ENCODE measurements at regions of chr13 and their contacts with region 1.

Region 1: DNA sequence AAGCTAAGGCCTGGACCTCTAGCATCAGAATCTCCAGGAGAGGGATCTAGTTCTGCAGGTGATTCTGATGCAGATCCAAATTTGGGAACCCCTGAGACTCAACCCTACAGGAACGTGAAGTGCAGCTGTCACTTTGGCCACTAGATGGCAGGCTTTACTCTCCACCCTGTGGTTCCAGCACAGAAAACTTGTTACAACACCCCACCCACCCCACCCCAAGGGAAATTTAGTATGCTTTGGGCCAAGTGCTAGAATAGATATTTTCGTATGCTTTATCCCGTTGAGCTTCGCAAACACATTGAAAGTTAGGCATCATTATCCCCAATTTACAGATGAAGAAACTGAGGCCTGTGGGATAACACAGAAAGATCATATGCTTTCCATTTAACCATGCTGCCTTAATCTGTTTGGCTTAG is 232.0 kb downstream of the B3GLCT start:
- DNase-seq: peak; percentile 55
- H3K4me3 Mint-ChIP-seq: no peak overlapping the region
- H3K27ac Mint-ChIP-seq: no peak overlapping the region
- H3K4me1 Mint-ChIP-seq: no peaks in the 10 kb centered on the region
- H3K27me3 Mint-ChIP-seq: peaks cover 38% of the 10 kb centered on the region
- CTCF ChIP-seq: peak; percentile 88

Region 2: GRCh38 chr13:31250435-31250834 is 181.3 kb before region 1 on chr13:
- CTCF ChIA-PET with region 1: interaction called, 378 read pairs
- POLR2A ChIA-PET with region 1: no interaction called
- intact Hi-C with region 1: no loop called
- DNase-seq: no peak
- H3K4me3 Mint-ChIP-seq: no peak overlapping the region
- H3K27ac Mint-ChIP-seq: no peak overlapping the region
- H3K4me1 Mint-ChIP-seq: no peaks in the 10 kb centered on the region
- H3K27me3 Mint-ChIP-seq: no peaks in the 10 kb centered on the region
- CTCF ChIP-seq: no peak

Region 3: DNA sequence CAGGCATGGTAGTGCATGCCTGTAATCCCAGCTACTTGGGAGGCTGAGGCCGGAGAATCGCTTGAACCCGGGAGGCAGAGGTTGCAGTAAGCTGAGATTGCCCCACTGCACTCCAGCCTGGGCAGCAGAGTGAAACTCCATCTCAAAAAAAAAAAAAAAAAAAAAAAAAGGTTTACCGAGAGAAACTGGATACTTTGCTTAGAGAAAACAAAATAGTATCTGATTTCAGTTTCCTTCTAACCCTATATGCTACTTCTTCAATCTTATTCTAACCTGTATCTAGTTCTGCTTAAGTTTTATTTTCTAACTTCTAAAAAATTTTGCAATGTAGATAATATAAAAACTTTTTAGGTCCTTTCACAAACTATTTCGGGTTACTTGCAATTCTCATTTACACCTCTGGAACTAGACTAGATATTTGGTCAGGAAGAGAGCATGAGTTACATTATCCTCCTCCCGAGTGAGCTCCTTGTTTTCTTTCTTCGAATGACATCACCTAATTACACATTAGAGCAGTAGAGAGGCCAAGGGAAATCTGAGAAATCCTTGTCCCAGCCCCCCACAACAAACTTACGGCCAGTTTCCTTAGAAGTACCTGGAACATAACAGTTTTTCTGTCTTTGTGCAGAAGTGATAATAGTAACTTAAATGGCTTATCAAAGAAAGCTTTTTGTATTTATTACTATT is 103.0 kb before region 1 on chr13:
- CTCF ChIA-PET with region 1: no interaction called
- POLR2A ChIA-PET with region 1: no interaction called
- intact Hi-C with region 1: no loop called
- DNase-seq: no peak
- H3K4me3 Mint-ChIP-seq: no peak overlapping the region
- H3K27ac Mint-ChIP-seq: no peak overlapping the region
- H3K4me1 Mint-ChIP-seq: no peaks in the 10 kb centered on the region
- H3K27me3 Mint-ChIP-seq: no peaks in the 10 kb centered on the region
- CTCF ChIP-seq: no peak

Region 4: DNA sequence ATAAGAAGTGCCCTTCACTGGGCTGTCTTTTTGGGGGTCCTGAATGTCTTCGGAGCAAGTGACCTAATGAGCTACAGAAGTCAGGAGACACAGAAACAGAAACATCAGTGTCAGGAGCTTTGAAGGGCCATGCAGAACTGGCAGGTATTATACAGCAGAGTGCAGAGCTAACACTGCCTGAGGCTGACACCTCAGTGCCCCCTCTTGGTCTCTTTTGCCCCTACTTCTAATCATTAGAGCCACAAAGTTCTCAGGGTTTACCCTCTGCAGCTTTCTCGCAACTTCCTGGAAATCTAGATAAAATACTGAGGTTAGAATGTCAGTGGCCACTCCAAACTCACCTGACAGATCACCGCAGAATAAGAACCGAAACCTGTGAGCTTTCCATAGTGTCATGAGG is 59.3 kb before region 1 on chr13:
- CTCF ChIA-PET with region 1: no interaction called
- POLR2A ChIA-PET with region 1: no interaction called
- intact Hi-C with region 1: no loop called
- DNase-seq: no peak
- H3K4me3 Mint-ChIP-seq: no peak overlapping the region
- H3K27ac Mint-ChIP-seq: no peak overlapping the region
- H3K4me1 Mint-ChIP-seq: no peaks in the 10 kb centered on the region
- H3K27me3 Mint-ChIP-seq: no peaks in the 10 kb centered on the region
- CTCF ChIP-seq: no peak

Region 5: DNA sequence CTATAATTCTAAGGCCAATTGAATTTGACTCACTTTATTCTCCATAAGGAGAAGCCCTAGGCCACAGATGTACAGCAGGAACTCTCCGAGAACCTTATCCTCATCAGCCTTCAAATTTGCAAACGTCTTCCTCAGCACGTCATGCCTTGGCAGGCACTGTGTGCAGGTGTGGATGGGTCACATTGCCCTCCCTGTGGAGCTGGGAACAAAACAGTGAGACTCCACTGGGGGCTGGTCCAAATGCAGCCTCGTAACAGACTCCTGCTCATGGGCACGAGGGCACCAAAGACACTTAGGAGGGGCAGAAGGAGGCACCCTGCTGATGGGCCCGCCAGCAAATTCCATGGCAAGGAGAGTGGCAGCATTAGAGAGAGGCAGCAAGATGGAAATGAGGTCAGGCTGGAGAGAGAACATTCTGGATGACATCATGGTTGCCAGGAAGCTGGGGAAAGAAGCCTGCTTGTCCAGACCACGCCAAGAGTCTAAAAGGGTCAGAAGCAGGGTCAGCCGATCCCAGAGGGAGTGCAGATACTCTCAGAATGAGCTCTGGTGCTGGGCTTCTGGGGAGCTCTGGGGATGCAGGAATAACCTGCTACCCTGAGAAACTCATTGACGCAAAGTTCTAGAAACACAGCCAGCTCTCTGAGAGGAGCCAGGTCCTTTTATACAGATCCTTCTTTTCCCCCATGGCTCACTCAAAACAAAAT is 10.2 kb after region 1 on chr13:
- CTCF ChIA-PET with region 1: interaction called, 13 read pairs
- POLR2A ChIA-PET with region 1: no interaction called
- intact Hi-C with region 1: no loop called
- DNase-seq: no peak
- H3K4me3 Mint-ChIP-seq: no peak overlapping the region
- H3K27ac Mint-ChIP-seq: no peak overlapping the region
- H3K4me1 Mint-ChIP-seq: no peaks in the 10 kb centered on the region
- H3K27me3 Mint-ChIP-seq: peaks cover 46% of the 10 kb centered on the region
- CTCF ChIP-seq: no peak

Region 6: GRCh38 chr13:31538067-31539042 is 106.6 kb after region 1 on chr13:
- CTCF ChIA-PET with region 1: interaction called, 10 read pairs
- POLR2A ChIA-PET with region 1: interaction called, 5 read pairs
- intact Hi-C with region 1: no loop called
- DNase-seq: peak; percentile 72
- H3K4me3 Mint-ChIP-seq: no peak overlapping the region
- H3K27ac Mint-ChIP-seq: no peak overlapping the region
- H3K4me1 Mint-ChIP-seq: no peaks in the 10 kb centered on the region
- H3K27me3 Mint-ChIP-seq: peaks cover 40% of the 10 kb centered on the region
- CTCF ChIP-seq: peak; percentile 51

Region 7: DNA sequence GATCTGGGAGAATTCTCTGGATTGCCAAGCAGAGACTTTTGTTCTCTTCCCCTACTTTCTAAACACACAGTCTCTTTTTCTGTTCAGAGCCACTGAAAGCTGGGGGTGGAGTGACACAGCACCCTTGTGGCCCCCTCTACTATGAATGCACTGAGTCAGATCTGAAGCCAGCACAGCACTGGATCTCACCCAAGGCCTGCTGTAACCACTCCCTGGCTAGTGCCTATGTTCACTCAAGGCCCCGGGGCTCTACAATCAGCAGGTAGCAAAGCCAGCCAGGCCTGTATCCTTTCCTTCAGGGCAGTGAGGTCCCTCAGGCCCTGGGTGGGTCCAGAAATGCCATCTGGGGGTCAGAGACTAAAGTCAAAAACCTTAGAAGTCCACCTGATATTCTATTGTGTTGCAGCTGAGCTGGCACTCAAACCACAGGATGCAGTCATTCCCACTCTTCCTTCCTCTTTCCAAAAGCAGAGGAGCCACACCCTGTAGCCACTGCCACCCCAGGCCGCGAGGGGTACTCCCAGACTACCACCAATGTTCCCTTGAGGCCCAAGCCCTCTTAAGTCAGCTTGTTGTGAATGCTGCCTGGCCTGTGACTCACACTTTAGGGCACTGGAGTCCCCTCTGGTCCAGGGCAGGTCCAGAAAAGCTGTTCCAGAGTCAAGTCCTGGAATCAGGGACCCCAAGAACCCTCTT is 197.5 kb after region 1 on chr13:
- CTCF ChIA-PET with region 1: no interaction called
- POLR2A ChIA-PET with region 1: no interaction called
- intact Hi-C with region 1: no loop called
- DNase-seq: peak; percentile 40
- H3K4me3 Mint-ChIP-seq: no peak overlapping the region
- H3K27ac Mint-ChIP-seq: no peak overlapping the region
- H3K4me1 Mint-ChIP-seq: no peaks in the 10 kb centered on the region
- H3K27me3 Mint-ChIP-seq: peaks cover 2% of the 10 kb centered on the region
- CTCF ChIP-seq: no peak

Region 8: GRCh38 chr13:31742097-31742734 is 310.5 kb after region 1 on chr13:
- CTCF ChIA-PET with region 1: interaction called, 22 read pairs
- POLR2A ChIA-PET with region 1: no interaction called
- intact Hi-C with region 1: loop called (anchors 1 kb)
- DNase-seq: peak; percentile 73
- H3K4me3 Mint-ChIP-seq: no peak overlapping the region
- H3K27ac Mint-ChIP-seq: no peak overlapping the region
- H3K4me1 Mint-ChIP-seq: peaks cover 5% of the 10 kb centered on the region
- H3K27me3 Mint-ChIP-seq: peaks cover 16% of the 10 kb centered on the region
- CTCF ChIP-seq: peak; percentile 90

Region 9: DNA sequence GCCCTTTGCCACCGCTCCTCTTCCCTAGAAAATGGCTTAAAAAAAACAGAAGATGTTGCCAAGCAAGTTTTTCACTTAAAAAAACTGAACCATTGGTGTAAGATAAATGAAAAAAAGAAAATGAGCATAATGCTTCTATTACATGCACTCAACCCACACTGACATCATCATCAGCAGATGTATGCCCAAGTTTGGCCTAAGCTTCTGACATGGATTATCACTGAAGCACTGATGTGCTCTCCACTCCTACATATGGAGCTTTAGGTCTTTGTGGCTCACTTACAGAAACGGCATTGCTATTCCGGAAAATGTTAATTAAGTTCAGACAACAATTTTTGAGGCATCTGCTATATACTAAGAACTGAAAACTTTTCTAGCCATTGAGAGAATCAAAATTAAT is 315.6 kb after region 1 on chr13:
- CTCF ChIA-PET with region 1: interaction called, 22 read pairs
- POLR2A ChIA-PET with region 1: no interaction called
- intact Hi-C with region 1: loop called (anchors 1 kb)
- DNase-seq: no peak
- H3K4me3 Mint-ChIP-seq: no peak overlapping the region
- H3K27ac Mint-ChIP-seq: no peak overlapping the region
- H3K4me1 Mint-ChIP-seq: peaks cover 14% of the 10 kb centered on the region
- H3K27me3 Mint-ChIP-seq: no peaks in the 10 kb centered on the region
- CTCF ChIP-seq: no peak

Region 10: DNA sequence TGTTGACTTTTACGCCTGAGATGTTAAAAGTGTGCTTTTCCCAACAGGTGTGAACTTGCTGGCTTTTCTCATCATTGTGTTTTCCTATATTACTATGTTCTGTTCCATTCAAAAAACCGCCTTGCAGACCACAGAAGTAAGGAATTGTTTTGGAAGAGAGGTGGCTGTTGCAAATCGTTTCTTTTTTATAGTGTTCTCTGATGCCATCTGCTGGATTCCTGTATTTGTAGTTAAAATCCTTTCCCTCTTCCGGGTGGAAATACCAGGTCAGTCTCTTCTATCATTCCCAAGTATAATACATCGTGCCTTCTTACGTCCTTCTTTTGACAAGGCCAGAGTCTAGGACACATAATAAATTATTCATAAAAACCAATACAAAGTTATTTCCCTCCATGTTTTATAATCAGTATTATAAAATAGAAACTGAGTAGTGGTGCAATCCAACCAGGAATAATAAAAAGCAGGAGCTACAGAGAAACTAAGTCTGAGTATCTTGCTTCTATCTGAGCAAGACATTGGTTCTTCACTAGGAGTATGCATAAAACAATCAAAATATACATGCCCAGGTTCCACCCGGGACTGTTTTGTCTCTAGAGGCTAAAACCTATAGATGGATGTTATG is 365.5 kb after region 1 on chr13:
- CTCF ChIA-PET with region 1: interaction called, 7 read pairs
- POLR2A ChIA-PET with region 1: interaction called, 3 read pairs
- intact Hi-C with region 1: loop called (anchors 1 kb)
- DNase-seq: peak; percentile 54
- H3K4me3 Mint-ChIP-seq: no peak overlapping the region
- H3K27ac Mint-ChIP-seq: no peak overlapping the region
- H3K4me1 Mint-ChIP-seq: peaks cover 13% of the 10 kb centered on the region
- H3K27me3 Mint-ChIP-seq: peaks cover 12% of the 10 kb centered on the region
- CTCF ChIP-seq: peak; percentile 39

Measured in MCF 10A (cell line).